Activated CD4-positive, alpha-beta T cell treated with anti-CD3 and anti-CD28 coated beads, Interleukin-2, amount 10 ng/mL, durations not matched to agents 24 days and 14 days (primary cell): ENCODE measurements at regions of chr2 and their contacts with region 1.

Region 1: GRCh38 chr2:113756355-113757137 is at the start of gene SLC35F5:
- DNase-seq: peak; percentile 99
- H3K4me3 Mint-ChIP-seq: peak within 1 kb of the TSS; percentile 93
- H3K27ac Mint-ChIP-seq: peak within 1 kb of the TSS; percentile 100
- H3K4me1 Mint-ChIP-seq: peaks cover 21% of the 10 kb centered on the region
- H3K27me3 Mint-ChIP-seq: no peaks in the 10 kb centered on the region
- total RNA-seq, gene SLC35F5: 24.1 and 25.1 TPM in 2 replicates

Region 2: DNA sequence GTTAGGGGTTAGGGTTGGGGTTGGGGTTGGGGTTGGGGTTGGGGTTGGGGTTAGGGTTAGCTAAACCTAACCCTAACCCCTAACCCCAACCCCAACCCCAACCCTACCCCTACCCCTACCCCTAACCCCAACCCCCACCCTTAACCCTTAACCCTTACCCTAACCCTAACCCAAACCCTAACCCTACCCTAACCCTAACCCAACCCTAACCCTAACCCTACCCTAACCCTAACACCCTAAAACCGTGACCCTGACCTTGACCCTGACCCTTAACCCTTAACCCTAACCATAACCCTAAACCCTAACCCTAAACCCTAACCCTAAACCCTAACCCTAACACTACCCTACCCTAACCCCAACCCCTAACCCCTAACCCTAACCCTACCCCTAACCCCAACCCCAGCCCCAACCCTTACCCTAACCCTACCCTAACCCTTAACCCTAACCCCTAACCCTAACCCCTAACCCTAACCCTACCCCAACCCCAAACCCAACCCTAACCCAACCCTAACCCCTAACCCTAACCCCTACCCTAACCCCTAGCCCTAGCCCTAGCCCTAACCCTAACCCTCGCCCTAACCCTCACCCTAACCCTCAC is 153.6 kb before region 1 on chr2:
- intact Hi-C with region 1: loop called (anchors 5 kb)
- DNase-seq: no peak
- H3K4me3 Mint-ChIP-seq: peak overlapping the region; percentile 90
- H3K27ac Mint-ChIP-seq: peak overlapping the region; percentile 86
- H3K4me1 Mint-ChIP-seq: peaks cover 5% of the 10 kb centered on the region
- H3K27me3 Mint-ChIP-seq: no peaks in the 10 kb centered on the region

Region 3: DNA sequence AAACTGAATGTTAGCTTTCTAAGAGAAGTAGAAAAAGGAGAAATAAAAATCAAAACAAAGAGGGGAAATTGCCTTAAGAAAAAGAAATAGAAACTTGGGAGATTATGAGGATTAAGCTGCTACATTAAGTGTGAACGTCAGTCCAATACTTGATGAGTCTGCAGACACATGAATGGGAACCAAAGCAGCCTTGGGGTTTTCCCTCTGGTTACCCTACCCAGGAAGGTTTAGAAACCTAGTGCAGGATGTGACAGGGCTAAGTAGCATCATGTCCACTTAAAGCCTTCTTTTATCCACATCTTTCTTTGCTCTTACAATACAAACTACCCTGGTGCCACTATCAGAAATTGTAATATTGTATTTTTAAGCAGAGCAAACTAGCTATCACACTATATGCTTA is 22.4 kb before region 1 on chr2:
- intact Hi-C with region 1: no loop called
- DNase-seq: no peak
- H3K4me3 Mint-ChIP-seq: no peak overlapping the region
- H3K27ac Mint-ChIP-seq: no peak overlapping the region
- H3K4me1 Mint-ChIP-seq: peaks cover 8% of the 10 kb centered on the region
- H3K27me3 Mint-ChIP-seq: no peaks in the 10 kb centered on the region

Region 4: GRCh38 chr2:113977660-113978523 is 221.3 kb after region 1 on chr2:
- intact Hi-C with region 1: loop called (anchors 5 kb)
- DNase-seq: peak; percentile 52
- H3K4me3 Mint-ChIP-seq: no peak overlapping the region
- H3K27ac Mint-ChIP-seq: peak overlapping the region; percentile 35
- H3K4me1 Mint-ChIP-seq: peaks cover 11% of the 10 kb centered on the region
- H3K27me3 Mint-ChIP-seq: no peaks in the 10 kb centered on the region

Region 5: GRCh38 chr2:114089636-114090319 is 333.2 kb after region 1 on chr2:
- intact Hi-C with region 1: no loop called
- DNase-seq: no peak
- H3K4me3 Mint-ChIP-seq: no peak overlapping the region
- H3K27ac Mint-ChIP-seq: no peak overlapping the region
- H3K4me1 Mint-ChIP-seq: no peaks in the 10 kb centered on the region
- H3K27me3 Mint-ChIP-seq: peaks cover 2% of the 10 kb centered on the region